Activated CD4-positive, alpha-beta memory T cell treated with anti-CD3 and anti-CD28 coated beads, Interleukin-2, amount 10 ng/mL, durations not matched to agents 7 days and 5 days (primary cell): ENCODE measurements at regions of chr10 and their contacts with region 1.

Region 1: GRCh38 chr10:103481974-103482531 is 3.0 kb upstream of the CALHM3 start:
- DNase-seq: peak; percentile 38
- H3K4me3 Mint-ChIP-seq: no peak overlapping the region
- H3K27ac Mint-ChIP-seq: no peak overlapping the region
- H3K4me1 Mint-ChIP-seq: peaks cover 36% of the 10 kb centered on the region
- H3K27me3 Mint-ChIP-seq: peaks cover 3% of the 10 kb centered on the region

Region 2: GRCh38 chr10:103442031-103442461 is 40.0 kb before region 1 on chr10:
- CTCF ChIA-PET with region 1: interaction called, 10 read pairs
- POLR2A ChIA-PET with region 1: interaction called, 3 read pairs
- DNase-seq: no peak
- H3K4me3 Mint-ChIP-seq: no peak overlapping the region
- H3K27ac Mint-ChIP-seq: no peak overlapping the region
- H3K4me1 Mint-ChIP-seq: peaks cover 20% of the 10 kb centered on the region
- H3K27me3 Mint-ChIP-seq: no peaks in the 10 kb centered on the region

Region 3: DNA sequence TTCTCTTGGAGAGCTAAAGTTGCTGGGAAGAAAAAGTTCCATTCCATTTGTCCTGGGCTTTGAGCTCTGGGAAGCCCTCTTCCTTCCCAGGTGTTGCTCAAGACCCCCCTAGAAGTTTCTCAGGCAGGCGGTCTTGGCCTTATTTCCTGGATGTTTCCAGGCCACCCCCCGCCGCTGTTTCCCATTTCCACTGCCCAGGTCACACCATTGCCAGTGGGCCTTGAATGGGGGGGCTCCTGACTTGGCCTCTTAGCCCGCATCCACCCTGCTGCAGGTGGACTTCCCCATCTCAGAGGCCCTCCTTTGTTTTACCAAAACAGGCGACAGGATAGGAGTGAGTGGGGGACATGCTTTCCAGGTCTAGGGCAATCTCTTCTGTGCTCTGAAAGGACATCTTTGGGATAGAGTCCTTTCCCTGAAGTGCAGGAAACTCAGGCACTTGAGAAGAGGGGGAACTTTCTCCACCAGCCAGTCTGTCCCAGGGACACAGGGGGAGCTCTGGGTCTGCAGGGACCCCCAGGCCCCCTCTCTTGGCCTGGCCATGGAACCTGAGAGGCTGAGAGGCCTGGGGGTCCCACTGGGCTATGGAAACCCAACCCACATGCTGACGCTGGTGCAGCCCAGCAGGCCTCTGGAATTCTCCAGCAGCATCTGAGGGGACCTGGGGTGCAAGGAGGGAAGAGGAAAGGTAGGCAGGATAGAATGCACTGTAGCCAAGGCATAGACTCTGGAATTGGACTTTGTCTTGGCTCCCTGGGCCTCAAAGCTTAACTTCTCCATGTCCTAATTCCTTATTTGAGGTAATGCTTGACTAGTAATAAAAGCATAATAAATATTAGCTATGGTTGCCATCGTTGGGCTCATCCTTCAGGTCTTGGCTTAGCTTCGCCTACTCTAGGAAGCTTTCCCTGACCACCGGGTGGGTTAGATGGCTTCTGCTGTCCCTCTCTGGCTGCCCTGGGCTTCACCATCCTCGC is 29.0 kb after region 1 on chr10:
- CTCF ChIA-PET with region 1: no interaction called
- POLR2A ChIA-PET with region 1: no interaction called
- DNase-seq: no peak
- H3K4me3 Mint-ChIP-seq: no peak overlapping the region
- H3K27ac Mint-ChIP-seq: no peak overlapping the region
- H3K4me1 Mint-ChIP-seq: peaks cover 7% of the 10 kb centered on the region
- H3K27me3 Mint-ChIP-seq: peaks cover 43% of the 10 kb centered on the region

Region 4: DNA sequence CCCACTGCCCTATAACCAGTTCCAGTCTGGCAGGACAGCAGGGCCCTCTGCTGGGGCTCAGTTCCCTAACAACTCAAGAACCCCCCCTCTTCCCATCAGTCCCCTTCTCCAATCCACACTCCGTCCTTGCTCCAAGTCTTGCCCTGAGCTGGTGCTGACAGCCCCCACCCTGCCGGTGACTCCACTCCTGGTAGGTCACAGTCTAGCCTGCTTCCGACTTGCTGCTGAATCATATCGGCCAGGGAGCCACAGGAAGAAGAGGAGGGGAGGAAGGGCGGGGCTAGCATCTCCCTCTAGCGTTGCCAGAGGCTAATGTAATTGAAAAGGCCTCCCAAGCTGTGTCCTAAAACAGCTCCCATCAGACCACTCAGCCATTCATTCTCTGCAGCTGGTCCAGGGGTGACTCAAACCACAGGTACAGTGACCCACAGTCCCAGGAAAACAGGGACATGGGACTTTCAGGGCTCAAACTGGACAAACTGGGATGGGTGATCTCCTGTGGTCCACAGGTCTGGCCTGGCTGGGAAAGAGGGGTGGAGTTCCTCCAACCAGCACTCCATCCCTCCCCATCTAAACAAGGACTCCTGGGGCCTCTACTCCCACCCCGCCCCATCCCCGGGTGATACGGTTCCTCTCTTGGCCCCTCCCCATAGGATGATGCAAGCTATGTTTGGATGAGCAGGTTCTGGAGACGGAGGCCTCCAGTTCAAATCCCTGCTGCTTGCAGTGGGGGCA is 214.5 kb after region 1 on chr10:
- CTCF ChIA-PET with region 1: no interaction called
- POLR2A ChIA-PET with region 1: no interaction called
- DNase-seq: peak; percentile 89
- H3K4me3 Mint-ChIP-seq: peak overlapping the region; percentile 54
- H3K27ac Mint-ChIP-seq: peak overlapping the region; percentile 75
- H3K4me1 Mint-ChIP-seq: peaks cover 49% of the 10 kb centered on the region
- H3K27me3 Mint-ChIP-seq: no peaks in the 10 kb centered on the region

Region 5: GRCh38 chr10:103772096-103772845 is 290.2 kb after region 1 on chr10:
- CTCF ChIA-PET with region 1: no interaction called
- POLR2A ChIA-PET with region 1: no interaction called
- DNase-seq: peak; percentile 78
- H3K4me3 Mint-ChIP-seq: peak overlapping the region; percentile 79
- H3K27ac Mint-ChIP-seq: peak overlapping the region; percentile 90
- H3K4me1 Mint-ChIP-seq: peaks cover 40% of the 10 kb centered on the region
- H3K27me3 Mint-ChIP-seq: peaks cover 6% of the 10 kb centered on the region